H1 (cell line): ENCODE measurements at regions of chr12 and their contacts with region 1.

Region 1: GRCh38 chr12:131990066-131990979 is 40.6 kb downstream of the EP400 start:
- DNase-seq: peak; percentile 46 to 55
- H3K4me3 ChIP-seq: peak overlapping the region in 3 of 4 experiments; percentile 0 to 26 (median 0); a peak in 3 of 8 replicates
- H3K27ac ChIP-seq: peak overlapping the region; percentile 88
- H3K4me1 ChIP-seq: peaks cover 20 to 31% (median 24%) of the 10 kb centered on the region in 4 experiments
- H3K27me3 ChIP-seq: no peaks in the 10 kb centered on the region
- CTCF ChIP-seq: no peak
- EP300 ChIP-seq: peak in 1 of 2 experiments; percentile 79; a peak in 1 of 3 replicates
- POLR2A ChIP-seq: no peak; a peak in 1 of 3 replicates
- RAD21 ChIP-seq: no peak

Region 2: DNA sequence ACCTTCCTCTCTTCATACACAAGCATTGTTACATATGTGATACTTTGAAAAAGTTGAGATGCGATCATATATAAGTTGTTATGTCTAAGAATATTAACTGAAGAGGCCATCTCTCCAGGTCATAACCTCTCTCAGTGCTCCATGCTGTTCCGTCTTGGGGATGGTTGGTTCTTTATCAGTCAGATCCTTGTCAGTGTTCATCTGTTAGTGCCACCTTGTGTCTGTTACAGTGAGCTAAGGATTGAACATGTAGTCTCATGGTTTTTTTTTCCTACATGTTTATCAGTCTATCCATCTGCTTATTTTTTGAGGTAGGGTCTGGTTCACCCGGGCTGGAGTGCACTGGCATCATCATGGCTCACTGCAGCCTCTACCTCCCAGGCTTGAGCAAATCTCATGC is 10.1 kb before region 1 on chr12:
- CTCF ChIA-PET with region 1: interaction called, 4 read pairs
- POLR2A ChIA-PET with region 1: interaction called, 10 read pairs
- DNase-seq: no peak
- H3K4me3 ChIP-seq: no peak overlapping the region
- H3K27ac ChIP-seq: no peak overlapping the region
- H3K4me1 ChIP-seq: no peaks in the 10 kb centered on the region
- H3K27me3 ChIP-seq: no peaks in the 10 kb centered on the region
- CTCF ChIP-seq: no peak
- EP300 ChIP-seq: no peak
- POLR2A ChIP-seq: no peak
- RAD21 ChIP-seq: no peak

Region 3: GRCh38 chr12:132003846-132004245 is 13.5 kb after region 1 on chr12:
- CTCF ChIA-PET with region 1: interaction called, 17 read pairs
- POLR2A ChIA-PET with region 1: interaction called, 4 read pairs
- DNase-seq: no peak
- H3K4me3 ChIP-seq: no peak overlapping the region
- H3K27ac ChIP-seq: no peak overlapping the region
- H3K4me1 ChIP-seq: no peaks in the 10 kb centered on the region
- H3K27me3 ChIP-seq: no peaks in the 10 kb centered on the region
- CTCF ChIP-seq: no peak
- EP300 ChIP-seq: no peak
- POLR2A ChIP-seq: no peak
- RAD21 ChIP-seq: no peak